SK-N-SH (cell line): ENCODE measurements at regions of chrX and their contacts with region 1.

Region 1: DNA sequence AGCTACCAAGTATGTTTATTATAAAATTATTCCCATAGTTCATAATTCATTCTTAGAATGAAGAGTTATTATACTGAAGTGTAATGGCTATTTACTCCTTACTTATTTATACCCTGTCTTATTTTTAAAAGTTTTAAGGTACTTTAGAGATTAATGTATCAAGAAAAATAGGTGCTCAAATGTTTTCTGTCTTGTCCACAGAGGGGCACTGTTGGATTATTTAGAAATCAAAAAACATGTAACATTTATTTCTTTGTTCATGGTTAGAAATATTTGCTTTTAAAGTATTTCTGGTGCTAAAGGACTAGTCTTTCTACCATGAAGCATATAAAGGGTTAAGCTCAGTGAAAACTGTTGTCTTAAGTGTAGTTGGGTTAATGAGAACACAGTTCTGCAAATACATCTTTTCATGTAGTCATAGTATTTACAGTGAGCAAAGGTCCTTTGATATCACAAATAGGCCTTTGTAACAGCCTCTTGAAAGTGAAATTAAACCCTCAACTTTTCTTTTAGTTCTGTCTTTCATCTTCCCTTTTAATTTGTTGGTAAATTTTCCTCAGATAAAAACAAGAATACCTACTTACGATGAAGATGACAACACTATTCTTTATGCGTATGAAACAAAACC is 7.7 kb downstream of the SCML1 start:
- DNase-seq: no peak
- H3K4me3 ChIP-seq: no peak overlapping the region
- H3K27ac ChIP-seq: no peak overlapping the region
- H3K4me1 ChIP-seq: no peaks in the 10 kb centered on the region
- H3K27me3 ChIP-seq: no peaks in the 10 kb centered on the region
- CTCF ChIP-seq: peak; percentile 69
- EP300 ChIP-seq: no peak
- RAD21 ChIP-seq: peak; percentile 56; the same call in 1 of the 2 replicates

Region 2: GRCh38 chrX:18210470-18210869 is 465.5 kb after region 1 on chrX:
- CTCF ChIA-PET with region 1: interaction called, 13 read pairs
- POLR2A ChIA-PET with region 1: no interaction called
- DNase-seq: no peak
- H3K4me3 ChIP-seq: no peak overlapping the region
- H3K27ac ChIP-seq: no peak overlapping the region
- H3K4me1 ChIP-seq: no peaks in the 10 kb centered on the region
- H3K27me3 ChIP-seq: no peaks in the 10 kb centered on the region
- CTCF ChIP-seq: peak; percentile 47
- EP300 ChIP-seq: no peak
- RAD21 ChIP-seq: peak; percentile 64